ENCODE measurements at regions of chr3 and their contacts with region 1.

Region 1: GRCh38 chr3:45964139-45964538 is 20.9 kb downstream of the CXCR6 start:
- DNase-seq: no peak
- ATAC-seq: no peak
- H3K4me3 Mint-ChIP-seq: peak overlapping the region in 1 of 10 donors; percentile 33
- H3K27ac Mint-ChIP-seq: peak overlapping the region in 4 of 10 donors; percentile 8 to 85 (median 34)
- H3K4me1 Mint-ChIP-seq: peaks cover 20 to 52% (median 41%) of the 10 kb centered on the region in 4 donors
- H3K27me3 Mint-ChIP-seq: no peaks in the 10 kb centered on the region

Region 2: DNA sequence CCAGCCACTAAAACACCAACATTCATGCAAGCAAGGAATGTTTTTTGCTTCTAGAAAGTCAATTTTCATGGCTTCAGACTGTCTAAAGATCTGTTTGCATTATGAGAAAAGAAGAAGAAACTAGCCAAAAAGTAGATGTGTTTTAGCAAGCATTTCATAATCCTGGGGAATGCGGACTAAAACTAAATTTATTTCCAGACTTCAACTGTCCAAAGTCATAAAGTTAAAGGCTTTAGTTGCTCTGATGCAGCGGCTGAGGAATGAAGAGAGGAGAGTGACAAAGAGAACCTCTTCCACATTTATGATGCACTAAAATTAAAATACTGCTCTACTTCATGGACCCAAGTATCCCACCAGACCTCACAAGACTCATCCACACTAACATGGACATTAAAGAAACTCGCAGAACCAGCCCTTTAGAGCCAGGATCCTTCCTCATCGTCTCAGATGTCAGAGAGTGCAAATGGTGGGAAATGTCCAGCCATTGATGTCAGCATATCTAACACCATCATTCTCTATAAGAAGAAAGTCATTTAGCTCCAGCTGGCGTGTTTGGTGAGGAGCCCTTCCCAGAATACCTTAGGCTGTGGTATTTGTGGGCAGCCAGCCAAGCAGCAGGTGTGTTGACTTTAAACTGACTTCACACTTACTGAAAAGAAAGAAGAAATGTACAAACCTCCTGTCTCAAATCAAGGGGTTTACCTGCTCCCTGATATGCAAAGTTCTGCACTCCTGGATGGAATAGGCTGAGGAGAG is 14.0 kb after region 1 on chr3:
- POLR2A ChIA-PET with region 1: interaction called, 22 read pairs
- DNase-seq: peak in 4 of 10 donors; percentile 9 to 28 (median 23)
- ATAC-seq: peak in 1 of 2 donors; percentile 21
- H3K4me3 Mint-ChIP-seq: peak overlapping the region in 9 of 10 donors; percentile 33 to 81 (median 64)
- H3K27ac Mint-ChIP-seq: peak overlapping the region; percentile 21 to 96 (median 86)
- H3K4me1 Mint-ChIP-seq: peaks cover 32 to 66% (median 53%) of the 10 kb centered on the region in 4 donors
- H3K27me3 Mint-ChIP-seq: no peaks in the 10 kb centered on the region

Measured in naive thymus-derived CD8-positive, alpha-beta T cell (primary cell).